ENCODE measurements at regions of chr17 and their contacts with region 1.

Region 1: DNA sequence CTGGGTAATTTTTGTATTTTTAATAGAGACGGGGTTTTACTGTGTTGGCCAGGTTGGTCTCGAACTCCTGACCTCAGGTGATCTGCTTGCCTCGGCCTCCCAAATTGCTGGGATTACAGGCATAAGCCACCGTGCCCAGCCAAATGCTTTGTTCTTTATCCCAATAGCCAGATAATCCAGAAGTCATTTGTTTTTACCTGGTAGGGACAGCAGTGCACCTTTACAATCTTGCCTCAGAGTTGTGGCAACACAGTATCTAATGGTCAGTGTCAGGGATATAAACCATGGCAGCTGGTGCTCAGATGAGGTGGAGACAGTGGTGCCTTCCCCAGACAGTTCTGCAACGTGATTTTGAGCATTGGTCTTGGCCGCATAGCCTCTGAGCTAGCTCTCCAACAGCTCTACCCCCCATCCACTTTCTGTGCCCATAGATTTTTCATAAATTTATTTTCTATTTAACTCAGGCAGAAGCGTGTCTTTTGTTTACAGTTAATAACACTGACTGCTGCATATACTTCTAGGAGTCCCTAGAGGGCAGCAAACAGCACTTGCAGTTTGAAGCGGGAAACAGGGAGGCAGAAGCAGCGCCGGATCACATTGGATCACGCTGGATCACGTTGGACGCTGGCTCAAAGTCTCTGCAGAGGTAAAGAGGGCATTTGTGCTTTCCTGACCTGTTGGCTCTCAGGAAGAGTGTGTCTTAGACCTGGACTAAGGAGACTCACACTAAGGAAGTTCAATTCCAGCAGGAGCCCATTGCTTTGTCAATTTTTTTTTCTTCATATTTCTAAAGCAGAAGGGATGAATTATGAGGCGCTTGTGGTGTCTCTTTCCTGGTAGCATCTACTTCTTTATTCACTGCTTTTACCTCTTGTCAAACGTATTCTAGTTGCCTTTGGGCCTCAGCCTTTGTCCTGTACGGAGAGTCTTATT is 5.1 kb upstream of the GGT6 start:
- DNase-seq: peak; percentile 78
- H3K4me3 ChIP-seq: peak overlapping the region in 1 of 2 experiments; percentile 12; a peak in 1 of 4 replicates
- H3K27ac ChIP-seq: no peak overlapping the region
- H3K4me1 ChIP-seq: no peaks in the 10 kb centered on the region
- H3K27me3 ChIP-seq: peaks cover 5% of the 10 kb centered on the region; the same call in 1 of the 2 replicates
- CTCF ChIP-seq: peak; percentile 85
- EP300 ChIP-seq: no peak
- RAD21 ChIP-seq: peak; percentile 69

Region 2: GRCh38 chr17:4394208-4395110 is 171.0 kb before region 1 on chr17:
- CTCF ChIA-PET with region 1: no interaction called
- POLR2A ChIA-PET with region 1: no interaction called
- DNase-seq: no peak
- H3K4me3 ChIP-seq: no peak overlapping the region
- H3K27ac ChIP-seq: no peak overlapping the region
- H3K4me1 ChIP-seq: no peaks in the 10 kb centered on the region
- H3K27me3 ChIP-seq: no peaks in the 10 kb centered on the region
- CTCF ChIP-seq: no peak
- EP300 ChIP-seq: no peak
- RAD21 ChIP-seq: no peak

Region 3: GRCh38 chr17:4554997-4555799 is 10.3 kb before region 1 on chr17 and contains the start of gene MYBBP1A:
- CTCF ChIA-PET with region 1: interaction called, 18 read pairs
- POLR2A ChIA-PET with region 1: interaction called, 3 read pairs
- DNase-seq: peak; percentile 100
- H3K4me3 ChIP-seq: peak within 1 kb of the TSS; percentile 95 to 99
- H3K27ac ChIP-seq: peak within 1 kb of the TSS; percentile 62 to 94
- H3K4me1 ChIP-seq: peaks cover 7 to 18% of the 10 kb centered on the region in 2 experiments; a peak in 1 of 4 replicates
- H3K27me3 ChIP-seq: no peaks in the 10 kb centered on the region
- CTCF ChIP-seq: peak; percentile 52
- EP300 ChIP-seq: no peak
- RAD21 ChIP-seq: no peak
- polyA plus RNA-seq, gene MYBBP1A: 74.7 and 93.0 TPM in 2 replicates

Region 4: DNA sequence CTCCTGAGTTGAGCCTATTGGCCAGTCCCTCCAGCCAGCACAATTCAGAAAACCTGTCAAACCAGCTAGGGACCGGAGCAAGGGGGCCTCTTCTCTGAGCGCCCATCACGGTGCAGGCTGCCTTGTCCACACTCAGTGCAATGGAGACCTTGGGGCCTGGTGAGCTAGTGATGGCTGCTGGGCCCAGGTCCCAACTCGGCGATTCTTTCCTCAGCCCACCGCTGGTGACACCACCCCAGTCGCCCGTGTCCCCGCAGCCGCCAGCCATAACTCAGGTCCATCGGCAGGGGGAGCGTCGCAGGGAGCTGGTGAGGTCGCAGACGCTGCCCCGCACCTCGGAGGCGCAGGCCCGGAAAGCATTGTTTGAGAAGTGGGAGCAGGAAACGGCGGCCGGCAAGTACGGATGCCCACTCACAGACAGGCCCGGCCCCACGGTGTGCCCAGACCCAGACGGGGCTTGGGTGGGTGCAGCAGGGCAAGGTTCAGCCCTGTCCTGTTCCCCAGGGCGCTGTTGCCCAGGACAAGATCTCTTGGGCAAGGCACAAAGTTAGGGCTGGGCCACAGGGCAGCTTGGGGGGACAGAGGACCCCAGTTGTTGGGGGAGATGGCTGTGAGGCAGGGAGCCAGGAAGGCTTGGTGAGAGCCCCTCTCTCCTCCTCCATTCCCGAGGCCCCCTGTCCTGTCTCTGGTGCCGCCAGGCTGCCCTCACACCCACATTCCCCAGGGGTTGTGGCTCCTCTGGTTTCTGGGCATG is 29.6 kb after region 1 on chr17:
- CTCF ChIA-PET with region 1: interaction called, 75 read pairs
- POLR2A ChIA-PET with region 1: no interaction called
- DNase-seq: peak; percentile 68
- H3K4me3 ChIP-seq: no peak overlapping the region
- H3K27ac ChIP-seq: no peak overlapping the region
- H3K4me1 ChIP-seq: peaks cover 0 to 16% of the 10 kb centered on the region in 2 experiments; a peak in 1 of 4 replicates
- H3K27me3 ChIP-seq: peaks cover 28% of the 10 kb centered on the region
- CTCF ChIP-seq: no peak; the same call in 1 of the 2 replicates
- EP300 ChIP-seq: no peak
- RAD21 ChIP-seq: no peak

Region 5: DNA sequence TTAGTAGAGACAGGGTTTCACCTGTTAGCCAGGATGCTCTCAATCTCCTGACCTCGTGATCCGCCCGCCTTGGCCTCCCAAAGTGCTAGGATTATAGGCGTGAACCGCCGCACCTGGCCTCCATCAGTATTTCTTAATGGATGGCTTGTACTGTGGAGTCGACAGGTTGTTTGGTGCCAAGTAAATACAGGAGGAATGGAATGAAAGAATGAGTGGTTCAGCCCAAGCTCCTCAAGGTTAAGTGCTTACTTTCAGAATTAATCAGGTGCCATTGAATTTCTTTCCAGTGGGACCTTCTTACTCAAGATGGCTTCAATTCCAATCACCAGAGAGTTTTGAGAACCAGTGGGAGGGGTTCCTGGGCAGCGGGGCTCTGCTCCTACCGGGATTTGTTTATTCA is 51.0 kb after region 1 on chr17:
- CTCF ChIA-PET with region 1: interaction called, 237 read pairs
- POLR2A ChIA-PET with region 1: no interaction called
- DNase-seq: no peak
- H3K4me3 ChIP-seq: no peak overlapping the region
- H3K27ac ChIP-seq: no peak overlapping the region
- H3K4me1 ChIP-seq: no peaks in the 10 kb centered on the region; a peak in 1 of 4 replicates
- H3K27me3 ChIP-seq: peaks cover 11% of the 10 kb centered on the region; the same call in 1 of the 2 replicates
- CTCF ChIP-seq: no peak
- EP300 ChIP-seq: no peak
- RAD21 ChIP-seq: no peak

Region 6: GRCh38 chr17:4635823-4636375 is 70.4 kb after region 1 on chr17:
- CTCF ChIA-PET with region 1: interaction called, 76 read pairs
- POLR2A ChIA-PET with region 1: interaction called, 3 read pairs
- DNase-seq: no peak
- H3K4me3 ChIP-seq: no peak overlapping the region
- H3K27ac ChIP-seq: no peak overlapping the region
- H3K4me1 ChIP-seq: peaks cover 0 to 6% of the 10 kb centered on the region in 2 experiments; a peak in 1 of 4 replicates
- H3K27me3 ChIP-seq: peaks cover 37% of the 10 kb centered on the region
- CTCF ChIP-seq: no peak
- EP300 ChIP-seq: no peak
- RAD21 ChIP-seq: no peak

Measured in SK-N-SH (cell line).